Esophagus squamous epithelium (tissue), 5 donors: ENCODE measurements at regions of chr1 and their contacts with region 1.

Region 1: GRCh38 chr1:27267153-27267552 is 32.7 kb downstream of the WDTC1 start:
- DNase-seq: no peak
- H3K4me3 ChIP-seq: no peak overlapping the region
- H3K27ac ChIP-seq: no peak overlapping the region
- H3K4me1 ChIP-seq: no peaks in the 10 kb centered on the region
- H3K27me3 ChIP-seq: no peaks in the 10 kb centered on the region
- CTCF ChIP-seq: no peak
- POLR2A ChIP-seq: no peak

Region 2: DNA sequence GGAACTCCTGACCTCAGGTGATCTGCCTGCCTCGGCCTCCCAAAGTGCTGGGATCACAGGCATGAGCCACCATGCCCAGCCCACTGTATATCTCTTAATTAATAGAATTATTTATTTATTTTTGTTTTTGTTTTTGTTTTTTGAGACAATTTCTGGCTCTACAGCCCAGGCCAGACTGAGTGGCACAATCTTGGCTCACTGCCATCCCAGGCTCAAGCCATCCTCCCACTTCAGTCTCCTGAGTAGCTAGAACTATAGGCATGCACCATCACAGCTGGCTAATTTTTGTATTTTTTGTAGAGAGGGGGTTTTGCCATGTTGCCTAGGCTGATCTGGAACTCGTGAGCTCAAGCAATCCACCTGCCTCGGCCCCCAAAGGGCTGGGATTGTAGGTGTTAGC is 48.4 kb before region 1 on chr1:
- intact Hi-C with region 1: loop called (anchors 10 kb)
- DNase-seq: no peak
- H3K4me3 ChIP-seq: no peak overlapping the region
- H3K27ac ChIP-seq: no peak overlapping the region
- H3K4me1 ChIP-seq: no peaks in the 10 kb centered on the region
- H3K27me3 ChIP-seq: no peaks in the 10 kb centered on the region
- CTCF ChIP-seq: no peak
- POLR2A ChIP-seq: no peak

Region 3: GRCh38 chr1:27332536-27333281 is 65.6 kb after region 1 on chr1:
- intact Hi-C with region 1: no loop called
- DNase-seq: no peak
- H3K4me3 ChIP-seq: no peak overlapping the region
- H3K27ac ChIP-seq: peak overlapping the region in 2 of 4 donors; percentile 52 to 57
- H3K4me1 ChIP-seq: peaks cover 5 to 37% (median 11%) of the 10 kb centered on the region in 3 donors
- H3K27me3 ChIP-seq: no peaks in the 10 kb centered on the region
- CTCF ChIP-seq: peak; percentile 76 to 86 (median 83)
- POLR2A ChIP-seq: no peak

Region 4: DNA sequence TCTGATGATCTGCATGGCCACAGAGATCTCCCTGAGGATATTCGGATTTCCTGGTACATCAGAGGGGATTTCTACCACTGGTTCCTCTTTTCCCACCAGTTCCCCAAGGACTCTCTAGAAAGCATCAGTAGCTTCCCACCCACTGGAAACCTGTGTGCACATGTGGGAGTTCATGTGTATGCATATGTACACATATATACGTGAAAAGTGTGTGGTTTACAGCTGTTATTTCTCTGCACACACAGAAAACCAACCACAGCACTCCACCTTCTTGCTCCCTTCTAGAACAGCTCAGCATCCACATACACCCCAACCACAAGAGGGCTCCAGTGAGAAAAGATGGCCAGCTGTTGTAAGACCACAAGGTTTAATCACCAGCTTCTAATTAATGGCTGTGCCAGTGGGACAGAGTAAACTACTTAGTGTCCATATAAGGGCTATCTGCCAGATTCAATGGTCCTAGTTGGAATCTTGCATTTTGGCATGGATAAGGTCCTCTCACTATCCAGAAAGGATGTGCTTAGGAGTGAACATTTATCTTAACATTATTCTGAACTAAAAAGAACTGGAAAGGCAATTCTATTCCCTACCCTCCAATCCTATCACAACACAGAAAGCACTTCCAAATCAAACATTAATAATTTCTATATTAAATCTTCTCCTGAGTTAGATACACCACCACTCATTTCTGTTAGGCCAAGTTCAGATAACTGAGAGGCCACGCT is 149.4 kb after region 1 on chr1:
- intact Hi-C with region 1: no loop called
- DNase-seq: no peak
- H3K4me3 ChIP-seq: no peak overlapping the region
- H3K27ac ChIP-seq: peak overlapping the region in 3 of 4 donors; percentile 23 to 86 (median 84)
- H3K4me1 ChIP-seq: peaks cover 13 to 95% (median 43%) of the 10 kb centered on the region in 3 donors
- H3K27me3 ChIP-seq: no peaks in the 10 kb centered on the region
- CTCF ChIP-seq: peak; percentile 4 to 73 (median 67)
- POLR2A ChIP-seq: no peak